Activated B cell treated with CpG ODN at 0.5 μM for 24 hours (primary cell): ENCODE measurements at regions of chr2 and their contacts with region 1.

Region 1: DNA sequence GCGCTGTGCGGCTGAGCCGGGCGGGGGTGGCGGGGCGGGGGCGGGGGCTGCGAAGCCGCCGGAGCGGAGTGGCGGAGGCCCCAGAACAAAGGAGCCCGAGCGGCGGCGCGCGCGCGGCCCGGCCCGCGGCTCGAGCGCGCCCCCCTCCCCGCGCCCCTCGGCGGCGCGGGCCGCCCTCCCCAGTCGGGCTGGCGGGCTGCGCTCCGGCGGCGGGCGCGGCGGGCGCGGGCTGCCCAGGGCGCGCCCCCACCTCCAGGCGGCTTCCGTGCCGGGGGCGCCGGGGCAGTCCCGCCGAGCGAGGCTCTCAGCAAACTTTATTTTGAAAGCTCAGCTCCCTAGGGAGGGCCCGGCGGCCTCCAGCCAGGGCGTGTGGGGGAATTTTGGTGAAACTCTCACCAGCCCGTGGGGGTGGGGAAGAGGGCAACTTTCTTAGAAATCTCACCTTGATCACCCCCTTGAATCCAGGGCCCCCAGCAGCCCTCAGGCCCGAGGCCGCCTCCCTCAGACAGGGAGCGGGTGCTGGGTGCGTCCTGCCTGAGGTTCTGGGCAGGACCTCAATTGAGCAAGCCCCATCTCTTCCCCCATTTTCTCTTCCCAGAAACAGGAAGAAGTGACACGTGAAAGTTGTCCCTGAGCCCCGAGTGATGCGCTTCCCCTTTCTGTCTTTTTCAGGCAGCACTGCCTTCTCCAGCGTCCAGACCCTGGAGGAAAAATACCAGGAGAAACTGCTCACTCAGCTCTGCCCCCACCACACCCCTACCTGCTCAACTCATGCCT is 786 bp downstream of the TET3 start:
- DNase-seq: peak; percentile 81
- ATAC-seq: peak; percentile 72
- H3K4me3 Mint-ChIP-seq: peak overlapping the region; percentile 90
- H3K27ac Mint-ChIP-seq: peak overlapping the region; percentile 89
- H3K4me1 Mint-ChIP-seq: peaks cover 82% of the 10 kb centered on the region
- H3K27me3 Mint-ChIP-seq: no peaks in the 10 kb centered on the region
- CTCF ChIP-seq: no peak

Region 2: GRCh38 chr2:73176881-73177644 is 808.4 kb before region 1 on chr2:
- CTCF ChIA-PET with region 1: no interaction called
- POLR2A ChIA-PET with region 1: no interaction called
- intact Hi-C with region 1: no loop called
- DNase-seq: peak; percentile 87
- ATAC-seq: peak; percentile 92
- H3K4me3 Mint-ChIP-seq: peak overlapping the region; percentile 94
- H3K27ac Mint-ChIP-seq: peak overlapping the region; percentile 46
- H3K4me1 Mint-ChIP-seq: peaks cover 15% of the 10 kb centered on the region
- H3K27me3 Mint-ChIP-seq: peaks cover 43% of the 10 kb centered on the region
- CTCF ChIP-seq: peak; percentile 69

Region 3: DNA sequence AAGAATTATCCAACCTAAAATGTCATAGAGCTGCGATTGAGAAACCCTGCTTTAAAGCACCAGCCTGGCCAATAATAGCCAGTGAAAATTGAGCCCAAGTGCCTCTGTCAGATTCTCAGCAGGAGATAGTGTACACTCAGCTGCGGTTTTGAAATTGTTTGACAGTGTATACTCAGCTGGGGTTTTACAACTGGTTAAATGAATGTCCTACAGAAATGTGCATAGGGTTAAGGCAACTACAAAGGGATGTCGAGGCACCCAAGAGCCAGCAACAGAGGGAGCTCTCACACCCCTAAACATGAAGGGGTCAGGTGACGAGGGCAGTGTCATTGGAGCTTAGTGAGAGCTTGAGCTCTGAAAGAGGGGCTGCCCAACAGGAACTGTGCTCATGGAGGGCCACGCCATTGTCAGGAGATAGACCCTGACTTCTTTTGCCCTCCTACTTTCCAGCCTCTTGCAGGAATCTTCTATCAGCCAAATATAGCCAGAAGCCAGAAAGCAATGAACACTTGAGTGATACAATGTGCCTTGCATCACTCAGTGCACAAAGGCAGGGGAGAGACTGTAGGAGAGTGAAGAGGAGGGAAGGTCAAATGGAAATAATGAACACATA is 77.5 kb before region 1 on chr2:
- CTCF ChIA-PET with region 1: interaction called, 5 read pairs
- POLR2A ChIA-PET with region 1: no interaction called
- intact Hi-C with region 1: loop called (anchors 5 kb)
- DNase-seq: peak; percentile 23
- ATAC-seq: peak; percentile 93
- H3K4me3 Mint-ChIP-seq: no peak overlapping the region
- H3K27ac Mint-ChIP-seq: no peak overlapping the region
- H3K4me1 Mint-ChIP-seq: peaks cover 2% of the 10 kb centered on the region
- H3K27me3 Mint-ChIP-seq: no peaks in the 10 kb centered on the region
- CTCF ChIP-seq: no peak

Region 4: GRCh38 chr2:73944714-73945113 is 40.8 kb before region 1 on chr2:
- CTCF ChIA-PET with region 1: no interaction called
- POLR2A ChIA-PET with region 1: no interaction called
- intact Hi-C with region 1: loop called (anchors 5 kb)
- DNase-seq: no peak
- ATAC-seq: no peak
- H3K4me3 Mint-ChIP-seq: no peak overlapping the region
- H3K27ac Mint-ChIP-seq: no peak overlapping the region
- H3K4me1 Mint-ChIP-seq: peaks cover 44% of the 10 kb centered on the region
- H3K27me3 Mint-ChIP-seq: no peaks in the 10 kb centered on the region
- CTCF ChIP-seq: no peak

Region 5: GRCh38 chr2:74002487-74003391 is 17.2 kb after region 1 on chr2:
- CTCF ChIA-PET with region 1: no interaction called
- POLR2A ChIA-PET with region 1: interaction called, 36 read pairs
- intact Hi-C with region 1: loop called (anchors 1 kb)
- DNase-seq: peak; percentile 78
- ATAC-seq: peak; percentile 91
- H3K4me3 Mint-ChIP-seq: peak overlapping the region; percentile 82
- H3K27ac Mint-ChIP-seq: peak overlapping the region; percentile 50
- H3K4me1 Mint-ChIP-seq: peaks cover 73% of the 10 kb centered on the region
- H3K27me3 Mint-ChIP-seq: no peaks in the 10 kb centered on the region
- CTCF ChIP-seq: no peak

Region 6: DNA sequence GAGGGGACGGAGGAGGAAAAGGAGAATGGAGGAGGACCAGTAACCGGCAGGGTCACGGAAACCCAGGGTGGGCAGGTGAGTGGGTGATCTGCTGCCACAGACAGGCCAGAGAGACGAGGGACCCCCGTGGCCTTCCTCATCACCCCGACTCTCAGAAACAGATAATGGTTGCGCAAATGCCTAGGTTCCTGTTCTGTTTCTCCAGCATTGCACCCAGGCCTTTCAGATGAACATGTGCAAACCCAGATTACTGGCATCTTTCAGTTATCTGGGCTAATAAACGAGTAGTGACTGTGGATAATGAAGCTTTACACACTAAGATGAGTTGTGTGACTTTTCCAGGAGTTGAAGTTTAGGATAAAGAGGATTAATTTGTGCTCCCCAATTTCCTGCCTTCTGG is 45.7 kb after region 1 on chr2:
- CTCF ChIA-PET with region 1: no interaction called
- POLR2A ChIA-PET with region 1: interaction called, 14 read pairs
- intact Hi-C with region 1: loop called (anchors 1 kb)
- DNase-seq: no peak
- ATAC-seq: no peak
- H3K4me3 Mint-ChIP-seq: peak overlapping the region; percentile 90
- H3K27ac Mint-ChIP-seq: peak overlapping the region; percentile 99
- H3K4me1 Mint-ChIP-seq: peaks cover 84% of the 10 kb centered on the region
- H3K27me3 Mint-ChIP-seq: no peaks in the 10 kb centered on the region
- CTCF ChIP-seq: no peak

Region 7: DNA sequence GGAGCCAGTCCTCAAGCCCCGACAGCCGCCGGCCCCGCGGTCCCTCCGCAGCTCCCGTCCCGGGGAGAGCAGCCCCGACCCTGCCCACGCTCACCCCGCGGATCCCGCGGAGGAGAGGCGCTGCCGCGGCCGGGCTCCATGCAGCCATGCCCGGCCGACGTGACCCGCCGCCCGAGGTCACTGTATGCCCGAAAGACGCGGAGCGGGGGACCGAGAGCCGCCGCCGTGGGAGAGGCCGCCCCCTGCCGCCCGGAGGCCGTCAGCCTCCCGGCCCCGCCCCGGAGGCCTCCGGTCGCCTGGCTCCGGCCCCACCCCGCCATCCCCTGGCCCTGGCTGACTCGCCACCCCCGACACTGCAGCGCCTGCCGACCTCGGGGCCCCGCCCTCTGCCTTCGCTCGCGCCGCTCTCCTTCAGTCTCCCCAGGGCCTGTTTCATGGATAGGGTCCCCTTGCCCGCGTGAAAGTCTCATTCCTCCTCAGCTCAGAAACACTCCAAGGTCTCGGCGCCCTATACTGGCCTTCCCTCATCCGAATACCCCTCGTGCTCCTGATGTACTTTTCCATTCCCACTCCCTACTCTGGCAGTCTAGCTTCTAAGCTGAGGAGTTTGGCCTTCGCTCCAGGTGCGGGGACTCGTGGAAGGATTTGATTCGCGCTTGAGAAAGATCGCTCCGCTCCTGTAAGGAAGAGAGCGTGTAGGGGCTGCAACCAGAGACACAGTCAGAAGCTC is 162.4 kb after region 1 on chr2 and contains the start of gene BOLA3:
- CTCF ChIA-PET with region 1: no interaction called
- POLR2A ChIA-PET with region 1: no interaction called
- intact Hi-C with region 1: loop called (anchors 1 kb)
- DNase-seq: peak; percentile 86
- ATAC-seq: peak; percentile 97
- H3K4me3 Mint-ChIP-seq: no peak within 1 kb of the TSS
- H3K27ac Mint-ChIP-seq: no peak within 1 kb of the TSS
- H3K4me1 Mint-ChIP-seq: peaks cover 7% of the 10 kb centered on the region
- H3K27me3 Mint-ChIP-seq: no peaks in the 10 kb centered on the region
- CTCF ChIP-seq: no peak
- total RNA-seq, gene BOLA3: 18.8 and 19.1 TPM in 2 replicates

Region 8: GRCh38 chr2:74328074-74328473 is 342.6 kb after region 1 on chr2:
- CTCF ChIA-PET with region 1: no interaction called
- POLR2A ChIA-PET with region 1: no interaction called
- intact Hi-C with region 1: no loop called
- DNase-seq: no peak
- ATAC-seq: no peak
- H3K4me3 Mint-ChIP-seq: no peak overlapping the region
- H3K27ac Mint-ChIP-seq: no peak overlapping the region
- H3K4me1 Mint-ChIP-seq: no peaks in the 10 kb centered on the region
- H3K27me3 Mint-ChIP-seq: no peaks in the 10 kb centered on the region
- CTCF ChIP-seq: no peak

Region 9: GRCh38 chr2:74553892-74554645 is 568.6 kb after region 1 on chr2 and contains the start of gene LOXL3:
- CTCF ChIA-PET with region 1: no interaction called
- POLR2A ChIA-PET with region 1: interaction called, 11 read pairs
- intact Hi-C with region 1: no loop called
- DNase-seq: peak; percentile 83
- ATAC-seq: peak; percentile 51
- H3K4me3 Mint-ChIP-seq: peak within 1 kb of the TSS; percentile 97
- H3K27ac Mint-ChIP-seq: peak within 1 kb of the TSS; percentile 90
- H3K4me1 Mint-ChIP-seq: peaks cover 32% of the 10 kb centered on the region
- H3K27me3 Mint-ChIP-seq: peaks cover 7% of the 10 kb centered on the region
- CTCF ChIP-seq: no peak
- total RNA-seq, gene LOXL3: 1.4 and 2.3 TPM in 2 replicates